PC-9 (cell line): ENCODE measurements at regions of chr15 and their contacts with region 1.

Region 1: GRCh38 chr15:76336254-76337058 is at the start of gene ISL2:
- DNase-seq: no peak
- H3K4me3 ChIP-seq: no peak within 1 kb of the TSS
- H3K27ac ChIP-seq: no peak within 1 kb of the TSS
- H3K4me1 ChIP-seq: no peaks in the 10 kb centered on the region
- H3K27me3 ChIP-seq: no peaks in the 10 kb centered on the region
- CTCF ChIP-seq: no peak
- total RNA-seq, gene ISL2: 0.24 and 0.63 TPM in 2 replicates

Region 2: GRCh38 chr15:76217029-76217428 is 119.4 kb before region 1 on chr15:
- CTCF ChIA-PET with region 1: no interaction called
- POLR2A ChIA-PET with region 1: interaction called, 10 read pairs
- intact Hi-C with region 1: no loop called
- DNase-seq: peak; percentile 34 to 78
- H3K4me3 ChIP-seq: no peak overlapping the region
- H3K27ac ChIP-seq: peak overlapping the region; percentile 28; the same call in 1 of the 2 replicates
- H3K4me1 ChIP-seq: peaks cover 40% of the 10 kb centered on the region
- H3K27me3 ChIP-seq: no peaks in the 10 kb centered on the region
- CTCF ChIP-seq: no peak

Region 3: GRCh38 chr15:76267077-76267476 is 69.4 kb before region 1 on chr15:
- CTCF ChIA-PET with region 1: no interaction called
- POLR2A ChIA-PET with region 1: no interaction called
- intact Hi-C with region 1: no loop called
- DNase-seq: no peak
- H3K4me3 ChIP-seq: no peak overlapping the region
- H3K27ac ChIP-seq: no peak overlapping the region
- H3K4me1 ChIP-seq: peaks cover 12% of the 10 kb centered on the region
- H3K27me3 ChIP-seq: no peaks in the 10 kb centered on the region
- CTCF ChIP-seq: no peak

Region 4: GRCh38 chr15:76369669-76370068 is 33.2 kb after region 1 on chr15:
- CTCF ChIA-PET with region 1: no interaction called
- POLR2A ChIA-PET with region 1: no interaction called
- intact Hi-C with region 1: no loop called
- DNase-seq: no peak
- H3K4me3 ChIP-seq: no peak overlapping the region
- H3K27ac ChIP-seq: no peak overlapping the region
- H3K4me1 ChIP-seq: no peaks in the 10 kb centered on the region
- H3K27me3 ChIP-seq: no peaks in the 10 kb centered on the region
- CTCF ChIP-seq: no peak